H1 (cell line): ENCODE measurements at regions of chr10 and their contacts with region 1.

Region 1: DNA sequence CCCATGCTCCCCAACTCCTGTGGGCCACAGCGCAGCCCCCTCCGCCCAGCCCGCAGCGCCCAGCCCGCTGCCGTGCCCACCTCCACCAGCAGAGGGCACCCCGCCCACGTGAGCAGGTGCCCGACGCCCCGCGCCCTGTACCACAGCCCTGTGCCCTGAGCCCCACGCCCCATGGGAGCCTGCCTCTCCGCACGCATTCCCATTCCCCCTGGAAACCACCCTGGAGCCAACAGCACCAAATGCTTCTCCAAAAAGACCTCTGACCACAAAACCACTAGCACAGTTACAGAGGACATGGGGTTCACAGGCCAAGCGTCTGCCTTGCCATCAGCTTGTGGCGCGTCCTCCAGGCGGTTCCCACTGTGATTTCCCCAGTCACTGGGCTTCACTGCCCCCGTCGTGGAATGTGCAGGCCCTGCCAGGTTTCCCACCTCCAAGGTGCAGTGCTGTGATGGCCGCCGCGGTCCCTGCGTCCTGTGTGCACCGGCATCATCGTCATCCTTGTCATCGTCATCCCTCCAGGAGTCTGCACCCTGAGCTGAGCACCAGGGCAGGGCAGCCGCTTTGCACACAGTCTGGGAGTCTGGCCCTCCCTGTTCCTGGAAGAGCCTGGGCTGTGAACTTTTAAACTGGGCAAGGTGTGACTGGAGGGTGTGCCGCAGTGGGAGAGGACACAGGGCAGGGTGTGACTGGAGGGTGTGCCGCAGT is 61.7 kb downstream of the PWWP2B start:
- DNase-seq: peak in 1 of 2 experiments; percentile 96
- H3K4me3 ChIP-seq: no peak overlapping the region
- H3K27ac ChIP-seq: no peak overlapping the region
- H3K4me1 ChIP-seq: no peaks in the 10 kb centered on the region
- H3K27me3 ChIP-seq: peaks cover 0 to 4% (median 0%) of the 10 kb centered on the region in 4 experiments; a peak in 2 of 7 replicates
- CTCF ChIP-seq: peak in 2 of 3 experiments; percentile 86 to 92; a peak in 3 of 4 replicates
- EP300 ChIP-seq: no peak
- POLR2A ChIP-seq: no peak
- RAD21 ChIP-seq: peak; percentile 91 to 92

Region 2: GRCh38 chr10:132281915-132282666 is 176.7 kb before region 1 on chr10:
- CTCF ChIA-PET with region 1: no interaction called
- POLR2A ChIA-PET with region 1: no interaction called
- DNase-seq: no peak
- H3K4me3 ChIP-seq: no peak overlapping the region
- H3K27ac ChIP-seq: no peak overlapping the region
- H3K4me1 ChIP-seq: peaks cover 0 to 2% (median 0%) of the 10 kb centered on the region in 4 experiments; a peak in 1 of 7 replicates
- H3K27me3 ChIP-seq: no peaks in the 10 kb centered on the region
- CTCF ChIP-seq: no peak
- EP300 ChIP-seq: no peak
- POLR2A ChIP-seq: no peak
- RAD21 ChIP-seq: no peak

Region 3: DNA sequence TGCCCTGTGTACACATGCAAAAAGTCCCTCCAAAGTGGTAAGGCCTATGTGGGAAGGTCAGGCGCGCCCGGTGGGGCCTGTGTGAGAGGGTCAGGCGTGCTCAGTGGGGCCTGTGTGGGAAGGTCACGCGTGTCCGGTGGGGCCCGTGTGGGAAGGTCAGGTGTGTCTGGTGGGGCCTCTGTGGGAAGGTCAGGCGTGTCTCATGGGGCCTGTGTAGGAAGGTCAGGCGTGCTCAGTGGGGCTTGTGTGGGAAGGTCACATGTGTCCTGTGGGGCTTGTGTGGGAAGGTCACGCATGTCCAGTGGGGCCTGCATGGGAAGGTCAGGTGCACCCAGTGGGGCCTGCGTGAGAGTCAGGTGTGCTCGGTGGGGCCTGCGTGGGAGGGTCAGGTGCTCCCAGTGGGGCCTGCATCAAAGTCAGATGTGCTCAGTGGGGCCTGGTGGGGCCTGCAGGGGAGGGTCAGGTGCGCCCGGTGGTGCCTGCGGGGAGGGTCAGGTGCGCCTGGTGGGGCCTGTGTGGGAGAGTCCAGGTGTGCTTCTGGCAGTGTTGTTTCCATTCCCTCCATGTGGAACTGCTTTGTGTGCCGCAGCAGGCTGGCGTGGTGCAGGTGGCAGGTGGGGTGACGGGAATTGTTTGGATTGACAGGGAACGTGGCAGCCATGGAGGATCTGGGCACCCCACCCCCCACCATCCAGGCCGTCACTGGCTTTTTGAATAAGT is 111.4 kb before region 1 on chr10:
- CTCF ChIA-PET with region 1: no interaction called
- POLR2A ChIA-PET with region 1: no interaction called
- DNase-seq: no peak
- H3K4me3 ChIP-seq: no peak overlapping the region
- H3K27ac ChIP-seq: no peak overlapping the region
- H3K4me1 ChIP-seq: no peaks in the 10 kb centered on the region
- H3K27me3 ChIP-seq: peaks cover 0 to 2% (median 1%) of the 10 kb centered on the region in 4 experiments; a peak in 1 of 7 replicates
- CTCF ChIP-seq: no peak
- EP300 ChIP-seq: no peak
- POLR2A ChIP-seq: no peak
- RAD21 ChIP-seq: no peak

Region 4: DNA sequence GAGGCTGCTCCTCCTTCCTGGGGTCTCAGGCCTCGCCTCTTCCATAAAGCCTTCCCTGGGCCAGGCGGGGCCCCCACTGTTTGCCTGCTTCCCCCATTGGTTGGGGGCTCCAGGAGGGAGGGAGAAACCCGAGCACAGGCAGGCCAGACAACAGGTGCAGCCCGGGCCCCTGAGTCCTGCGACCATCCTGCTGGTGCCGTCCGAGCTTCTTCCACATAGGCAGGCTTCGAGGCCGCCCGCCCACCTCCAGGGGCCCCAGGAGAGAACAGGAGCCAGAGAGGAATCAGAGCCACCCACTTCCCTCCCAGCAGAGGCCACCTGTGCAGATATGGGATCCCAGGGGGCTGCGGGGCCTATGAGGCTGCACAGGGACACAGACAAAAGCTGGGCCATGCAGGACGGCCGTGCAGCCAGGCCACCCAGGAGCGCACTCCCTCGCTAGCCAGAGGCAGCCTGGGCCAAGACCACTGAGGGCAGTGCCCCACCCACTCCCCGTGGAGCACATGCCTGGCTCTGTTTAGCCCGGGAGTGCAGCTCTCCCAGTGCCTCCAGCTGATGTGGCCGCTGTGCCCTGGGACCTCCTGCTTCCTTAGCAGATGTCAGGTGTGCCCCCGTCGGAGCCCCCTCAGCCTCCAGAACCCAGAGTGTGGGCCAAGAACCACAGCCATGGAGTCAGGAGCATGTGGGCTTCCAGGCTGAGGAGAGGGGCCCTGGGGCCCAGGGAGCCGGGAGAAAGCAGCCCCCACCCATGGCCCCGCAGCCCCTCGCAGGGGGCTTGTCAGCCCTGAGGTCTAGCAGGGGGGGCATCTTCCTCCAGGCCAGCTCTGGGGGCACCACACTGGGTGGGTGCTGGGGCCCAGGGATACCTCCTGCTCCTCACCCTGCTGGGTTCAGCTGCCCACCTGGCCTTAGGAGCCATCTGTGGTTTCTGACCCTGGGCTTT is 18.9 kb after region 1 on chr10:
- CTCF ChIA-PET with region 1: interaction called, 12 read pairs
- POLR2A ChIA-PET with region 1: no interaction called
- DNase-seq: no peak
- H3K4me3 ChIP-seq: no peak overlapping the region
- H3K27ac ChIP-seq: no peak overlapping the region
- H3K4me1 ChIP-seq: peaks cover 0 to 5% (median 2%) of the 10 kb centered on the region in 4 experiments; a peak in 2 of 7 replicates
- H3K27me3 ChIP-seq: no peaks in the 10 kb centered on the region; a peak in 2 of 7 replicates
- CTCF ChIP-seq: no peak
- EP300 ChIP-seq: no peak
- POLR2A ChIP-seq: no peak
- RAD21 ChIP-seq: no peak

Region 5: GRCh38 chr10:132593389-132593788 is 134.6 kb after region 1 on chr10:
- CTCF ChIA-PET with region 1: interaction called, 12 read pairs
- POLR2A ChIA-PET with region 1: no interaction called
- DNase-seq: no peak
- H3K4me3 ChIP-seq: no peak overlapping the region
- H3K27ac ChIP-seq: no peak overlapping the region
- H3K4me1 ChIP-seq: peaks cover 0 to 4% (median under 1%) of the 10 kb centered on the region in 4 experiments; a peak in 2 of 7 replicates
- H3K27me3 ChIP-seq: no peaks in the 10 kb centered on the region; a peak in 2 of 7 replicates
- CTCF ChIP-seq: no peak
- EP300 ChIP-seq: no peak
- POLR2A ChIP-seq: no peak
- RAD21 ChIP-seq: no peak